ENCODE measurements at regions of chr1 and their contacts with region 1.

Region 1: GRCh38 chr1:3649342-3650247 is at the start of gene WRAP73:
- DNase-seq: peak; percentile 76 to 88 (median 85)
- ATAC-seq: peak; percentile 99
- H3K4me3 ChIP-seq: peak within 1 kb of the TSS; percentile 63
- H3K4me3 Mint-ChIP-seq: peak within 1 kb of the TSS; percentile 79 to 91 (median 87)
- H3K27ac ChIP-seq: peak within 1 kb of the TSS; percentile 76
- H3K27ac Mint-ChIP-seq: peak within 1 kb of the TSS in 8 of 9 donors; percentile 2 to 82 (median 66)
- H3K4me1 ChIP-seq: peaks cover 11 to 16% of the 10 kb centered on the region in 2 donors
- H3K4me1 Mint-ChIP-seq: peaks cover 13 to 37% (median 33%) of the 10 kb centered on the region in 7 donors
- H3K27me3 ChIP-seq: peaks cover 3 to 20% of the 10 kb centered on the region in 2 donors
- H3K27me3 Mint-ChIP-seq: peaks cover 16 to 28% (median 28%) of the 10 kb centered on the region in 5 donors
- total RNA-seq, gene WRAP73: 28.1 to 42.0 (median 36.3) TPM

Region 2: DNA sequence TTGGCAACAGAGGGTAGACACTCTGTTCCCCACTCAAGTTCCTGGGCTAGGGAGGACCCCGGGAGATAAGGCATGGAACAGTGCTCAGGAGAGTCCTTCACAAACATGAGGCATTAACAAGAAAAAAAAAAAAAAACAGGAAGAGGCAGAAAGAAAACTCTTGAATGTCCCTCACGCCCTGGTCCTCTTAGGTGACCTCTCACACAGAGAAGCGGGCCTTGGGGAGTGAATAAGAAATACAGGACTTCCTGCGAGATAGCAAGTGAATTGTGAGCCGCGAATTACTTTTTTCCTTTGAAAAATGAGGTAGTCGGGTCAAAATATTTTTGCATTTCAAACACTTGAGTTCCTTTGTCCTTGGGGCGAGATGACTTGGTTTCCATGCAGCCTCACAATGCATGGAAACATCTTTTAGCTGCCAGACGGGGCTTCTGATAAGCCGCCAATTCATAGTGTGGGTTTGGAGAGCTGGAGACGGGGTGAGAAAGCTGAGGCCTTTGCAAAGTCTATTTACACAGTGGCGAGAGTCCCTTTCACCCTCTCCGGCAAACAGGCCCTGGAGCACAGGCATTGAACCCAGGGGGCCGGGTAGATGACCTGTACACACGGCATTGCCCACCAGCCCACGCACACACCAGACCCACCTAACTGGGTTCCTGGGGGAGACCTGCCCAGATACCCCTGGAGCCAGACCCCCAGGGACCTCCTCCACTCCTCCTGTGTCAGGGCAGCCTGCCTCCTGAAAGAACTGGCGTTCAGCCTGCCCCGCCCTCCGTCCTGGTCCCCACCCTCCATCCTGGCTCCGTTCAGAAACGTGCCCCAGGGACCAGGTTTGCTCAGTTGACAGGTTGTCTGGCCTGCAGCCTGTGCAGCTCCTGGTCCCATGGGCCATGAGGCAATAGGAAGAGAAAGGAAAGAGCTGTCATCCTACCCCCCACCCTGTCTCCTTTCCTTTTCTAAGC is 388.3 kb before region 1 on chr1:
- CTCF ChIA-PET with region 1: no interaction called
- POLR2A ChIA-PET with region 1: no interaction called
- intact Hi-C with region 1: no loop called
- DNase-seq: no peak
- ATAC-seq: no peak
- H3K4me3 ChIP-seq: no peak overlapping the region
- H3K4me3 Mint-ChIP-seq: no peak overlapping the region
- H3K27ac ChIP-seq: no peak overlapping the region
- H3K27ac Mint-ChIP-seq: no peak overlapping the region
- H3K4me1 ChIP-seq: no peaks in the 10 kb centered on the region
- H3K4me1 Mint-ChIP-seq: no peaks in the 10 kb centered on the region
- H3K27me3 ChIP-seq: no peaks in the 10 kb centered on the region
- H3K27me3 Mint-ChIP-seq: peaks cover 0 to 7% (median 0%) of the 10 kb centered on the region in 5 donors

Region 3: DNA sequence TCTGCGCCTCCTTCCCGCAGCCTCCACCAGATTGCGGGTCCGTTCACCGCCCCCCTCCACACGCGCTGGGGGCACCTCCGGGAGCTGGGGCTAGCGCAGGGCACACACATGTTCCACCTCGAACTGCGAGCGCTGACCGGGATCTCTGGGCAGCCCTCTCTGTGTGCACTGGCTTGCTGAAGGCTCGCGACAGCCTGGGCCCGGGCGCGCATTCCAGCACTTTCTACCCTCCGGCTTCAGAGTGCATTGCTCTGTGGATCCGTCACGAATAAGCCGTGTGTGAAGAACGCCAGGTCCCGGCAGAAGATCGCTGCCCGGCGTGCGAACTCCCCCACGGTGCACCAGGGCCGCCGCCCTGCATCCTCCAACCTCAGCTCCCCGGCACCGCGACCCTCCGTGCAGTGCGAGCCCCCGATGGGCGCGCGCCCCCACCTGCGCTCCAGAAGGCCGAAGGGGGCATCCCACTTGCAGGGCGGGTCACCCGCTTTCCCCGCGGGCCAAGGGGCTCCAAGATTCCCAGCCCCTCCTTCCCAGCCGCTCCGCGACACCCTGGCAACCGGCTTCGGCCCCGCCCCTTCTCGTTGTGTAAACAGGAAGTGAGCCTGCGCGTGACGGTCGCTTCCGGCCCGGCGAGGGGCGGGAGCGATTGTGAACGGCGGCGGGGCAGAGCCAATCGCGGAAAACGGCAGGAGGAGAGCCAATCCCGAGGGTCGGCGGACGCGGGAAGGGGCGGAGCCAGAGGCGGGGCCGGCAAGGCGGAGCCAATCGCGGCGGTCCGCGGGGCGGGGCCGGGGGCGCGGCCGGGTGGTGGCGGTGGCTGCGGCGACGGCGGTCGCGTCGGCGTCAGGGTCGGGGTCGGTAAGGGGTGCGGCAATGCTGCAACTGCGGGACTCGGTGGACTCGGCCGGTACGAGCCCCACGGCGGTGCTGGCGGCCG is 25.1 kb before region 1 on chr1 and contains the start of gene TPRG1L:
- CTCF ChIA-PET with region 1: no interaction called
- POLR2A ChIA-PET with region 1: interaction called, 10 read pairs
- intact Hi-C with region 1: loop called (anchors 1 kb)
- DNase-seq: peak; percentile 97 to 100 (median 99)
- ATAC-seq: peak; percentile 98
- H3K4me3 ChIP-seq: peak within 1 kb of the TSS; percentile 95
- H3K4me3 Mint-ChIP-seq: peak within 1 kb of the TSS; percentile 91 to 99 (median 96)
- H3K27ac ChIP-seq: peak within 1 kb of the TSS; percentile 78
- H3K27ac Mint-ChIP-seq: peak within 1 kb of the TSS; percentile 92 to 98 (median 96)
- H3K4me1 ChIP-seq: peaks cover 22% of the 10 kb centered on the region in 2 donors
- H3K4me1 Mint-ChIP-seq: peaks cover 27 to 57% (median 42%) of the 10 kb centered on the region in 7 donors
- H3K27me3 ChIP-seq: no peaks in the 10 kb centered on the region
- H3K27me3 Mint-ChIP-seq: peaks cover 0 to 13% (median 0%) of the 10 kb centered on the region in 5 donors
- total RNA-seq, gene TPRG1L: 15.6 to 61.4 (median 37.8) TPM

Region 4: GRCh38 chr1:3721955-3722465 is 72.4 kb after region 1 on chr1:
- CTCF ChIA-PET with region 1: no interaction called
- POLR2A ChIA-PET with region 1: no interaction called
- intact Hi-C with region 1: loop called in 1 of 2 experiments (anchors 5 kb)
- DNase-seq: no peak
- ATAC-seq: no peak
- H3K4me3 ChIP-seq: no peak overlapping the region
- H3K4me3 Mint-ChIP-seq: peak overlapping the region in 1 of 10 donors; percentile 39
- H3K27ac ChIP-seq: no peak overlapping the region
- H3K27ac Mint-ChIP-seq: peak overlapping the region in 1 of 9 donors; percentile 90
- H3K4me1 ChIP-seq: peaks cover 0 to 7% of the 10 kb centered on the region in 2 donors
- H3K4me1 Mint-ChIP-seq: peaks cover 0 to 12% (median 2%) of the 10 kb centered on the region in 7 donors
- H3K27me3 ChIP-seq: no peaks in the 10 kb centered on the region
- H3K27me3 Mint-ChIP-seq: no peaks in the 10 kb centered on the region

Region 5: GRCh38 chr1:3772027-3772714 is 122.6 kb after region 1 on chr1:
- CTCF ChIA-PET with region 1: no interaction called
- POLR2A ChIA-PET with region 1: no interaction called
- intact Hi-C with region 1: loop called in 1 of 2 experiments (anchors 1 kb)
- DNase-seq: peak; percentile 65 to 88 (median 80)
- ATAC-seq: peak; percentile 91
- H3K4me3 ChIP-seq: peak overlapping the region; percentile 51
- H3K4me3 Mint-ChIP-seq: peak overlapping the region; percentile 57 to 83 (median 72)
- H3K27ac ChIP-seq: peak overlapping the region; percentile 58
- H3K27ac Mint-ChIP-seq: peak overlapping the region in 4 of 9 donors; percentile 23 to 73 (median 64)
- H3K4me1 ChIP-seq: peaks cover 5 to 12% of the 10 kb centered on the region in 2 donors
- H3K4me1 Mint-ChIP-seq: peaks cover 5 to 22% (median 11%) of the 10 kb centered on the region in 7 donors
- H3K27me3 ChIP-seq: no peaks in the 10 kb centered on the region
- H3K27me3 Mint-ChIP-seq: peaks cover 0 to 3% (median 0%) of the 10 kb centered on the region in 5 donors

Region 6: GRCh38 chr1:3856908-3857790 is 207.6 kb after region 1 on chr1 and contains the starts of genes CEP104 and DFFB:
- CTCF ChIA-PET with region 1: no interaction called
- POLR2A ChIA-PET with region 1: no interaction called
- intact Hi-C with region 1: loop called (anchors 1 kb)
- DNase-seq: peak; percentile 98 to 99 (median 98)
- ATAC-seq: peak; percentile 98
- H3K4me3 ChIP-seq: peak within 1 kb of the TSS; percentile 98
- H3K4me3 Mint-ChIP-seq: peak within 1 kb of the TSS; percentile 93 to 99 (median 98)
- H3K27ac ChIP-seq: peak within 1 kb of the TSS; percentile 79
- H3K27ac Mint-ChIP-seq: peak within 1 kb of the TSS; percentile 88 to 97 (median 94)
- H3K4me1 ChIP-seq: peaks cover 17 to 25% of the 10 kb centered on the region in 2 donors
- H3K4me1 Mint-ChIP-seq: peaks cover 15 to 58% (median 41%) of the 10 kb centered on the region in 7 donors
- H3K27me3 ChIP-seq: no peaks in the 10 kb centered on the region
- H3K27me3 Mint-ChIP-seq: no peaks in the 10 kb centered on the region
- total RNA-seq, gene CEP104: 33.7 to 68.0 (median 45.6) TPM
- total RNA-seq, gene DFFB: 13.6 to 27.7 (median 19.2) TPM

Region 7: DNA sequence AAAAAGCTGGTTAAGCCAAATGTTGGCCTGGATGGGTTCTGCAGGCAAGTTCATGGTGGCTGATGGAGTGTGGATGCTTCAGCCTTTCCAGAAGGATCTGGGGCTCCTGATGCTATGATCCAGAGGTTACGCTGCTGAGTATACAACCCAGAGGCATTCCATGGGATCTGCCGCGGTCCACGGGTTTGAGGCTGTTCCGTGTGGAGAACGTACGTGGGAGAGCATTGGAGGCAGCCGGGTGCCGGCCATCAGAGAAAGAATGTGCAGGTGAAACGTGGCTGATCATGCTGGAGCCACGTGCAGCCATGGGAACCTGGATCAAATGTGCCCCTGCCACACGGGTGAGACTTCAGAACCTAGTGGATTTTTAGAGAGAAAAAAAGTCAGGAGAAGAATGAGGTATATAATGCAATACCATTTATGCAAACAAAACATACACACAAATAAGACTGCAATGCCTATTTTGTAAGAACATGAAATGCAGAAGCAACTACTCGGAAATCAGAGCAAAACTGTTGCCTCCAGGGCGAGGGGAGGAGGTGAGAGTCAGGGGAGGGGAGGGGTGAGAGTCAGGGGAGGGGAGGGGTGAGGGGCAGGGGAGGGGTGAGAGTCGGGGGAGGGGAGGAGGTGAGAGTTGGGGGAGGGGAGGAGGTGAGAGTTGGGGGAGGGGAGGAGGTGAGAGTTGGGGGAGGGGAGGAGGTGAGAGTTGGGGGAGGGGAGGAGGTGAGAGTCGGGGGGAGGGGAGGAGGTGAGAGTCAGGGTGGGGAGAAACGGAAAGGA is 366.9 kb after region 1 on chr1:
- CTCF ChIA-PET with region 1: no interaction called
- POLR2A ChIA-PET with region 1: no interaction called
- intact Hi-C with region 1: no loop called
- DNase-seq: no peak
- ATAC-seq: no peak
- H3K4me3 ChIP-seq: no peak overlapping the region
- H3K4me3 Mint-ChIP-seq: no peak overlapping the region
- H3K27ac ChIP-seq: no peak overlapping the region
- H3K27ac Mint-ChIP-seq: no peak overlapping the region
- H3K4me1 ChIP-seq: no peaks in the 10 kb centered on the region
- H3K4me1 Mint-ChIP-seq: peaks cover 0 to 11% (median 5%) of the 10 kb centered on the region in 7 donors
- H3K27me3 ChIP-seq: no peaks in the 10 kb centered on the region
- H3K27me3 Mint-ChIP-seq: peaks cover 0 to 24% (median 4%) of the 10 kb centered on the region in 5 donors

Measured in naive thymus-derived CD4-positive, alpha-beta T cell (primary cell).